Activated T-helper 2 cell treated with anti-CD3 and anti-CD28 coated beads, Interferon-gamma antibody, Interleukin-2, Interleukin-4, amounts not matched to agents 10 μg/mL and 5 μg/mL and 100 μg/mL, durations not matched to agents 14 hours and 24 hours and 36 hours (primary cell): ENCODE measurements at regions of chr13 and their contacts with region 1.

Region 1: DNA sequence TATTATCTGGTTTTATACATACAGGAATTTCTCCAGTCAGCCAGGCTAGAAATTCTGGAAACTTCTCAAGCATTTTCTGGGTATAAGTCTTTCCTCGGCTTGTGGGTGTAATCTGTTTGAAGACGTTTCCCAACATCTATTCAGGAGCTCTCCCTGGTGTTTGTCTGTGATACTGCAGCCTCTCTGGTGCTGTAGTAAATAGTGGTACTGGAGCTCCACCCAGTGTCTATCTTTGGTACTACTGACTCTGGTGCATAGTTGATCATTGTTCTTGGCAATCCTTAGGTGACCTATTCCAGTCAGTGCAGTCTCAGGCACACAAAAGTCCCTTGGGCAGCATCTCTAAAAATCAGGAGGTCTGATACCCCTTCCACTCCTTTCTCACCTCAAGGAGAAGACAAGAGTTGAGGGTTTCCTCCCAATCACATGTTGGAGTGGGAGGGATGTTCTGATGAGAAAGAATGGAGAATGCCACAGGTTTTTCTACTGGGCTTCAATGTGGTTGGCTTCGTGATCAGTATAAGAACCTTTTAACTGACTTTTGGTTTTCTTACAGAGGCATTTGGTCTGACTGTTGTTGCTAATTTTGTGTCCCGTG is 115.5 kb downstream of the CYSLTR2 start:
- DNase-seq: peak; percentile 70
- H3K4me3 Mint-ChIP-seq: no peak overlapping the region
- H3K27ac Mint-ChIP-seq: no peak overlapping the region
- H3K4me1 Mint-ChIP-seq: peaks cover 7% of the 10 kb centered on the region
- H3K27me3 Mint-ChIP-seq: peaks cover 34% of the 10 kb centered on the region

Region 2: DNA sequence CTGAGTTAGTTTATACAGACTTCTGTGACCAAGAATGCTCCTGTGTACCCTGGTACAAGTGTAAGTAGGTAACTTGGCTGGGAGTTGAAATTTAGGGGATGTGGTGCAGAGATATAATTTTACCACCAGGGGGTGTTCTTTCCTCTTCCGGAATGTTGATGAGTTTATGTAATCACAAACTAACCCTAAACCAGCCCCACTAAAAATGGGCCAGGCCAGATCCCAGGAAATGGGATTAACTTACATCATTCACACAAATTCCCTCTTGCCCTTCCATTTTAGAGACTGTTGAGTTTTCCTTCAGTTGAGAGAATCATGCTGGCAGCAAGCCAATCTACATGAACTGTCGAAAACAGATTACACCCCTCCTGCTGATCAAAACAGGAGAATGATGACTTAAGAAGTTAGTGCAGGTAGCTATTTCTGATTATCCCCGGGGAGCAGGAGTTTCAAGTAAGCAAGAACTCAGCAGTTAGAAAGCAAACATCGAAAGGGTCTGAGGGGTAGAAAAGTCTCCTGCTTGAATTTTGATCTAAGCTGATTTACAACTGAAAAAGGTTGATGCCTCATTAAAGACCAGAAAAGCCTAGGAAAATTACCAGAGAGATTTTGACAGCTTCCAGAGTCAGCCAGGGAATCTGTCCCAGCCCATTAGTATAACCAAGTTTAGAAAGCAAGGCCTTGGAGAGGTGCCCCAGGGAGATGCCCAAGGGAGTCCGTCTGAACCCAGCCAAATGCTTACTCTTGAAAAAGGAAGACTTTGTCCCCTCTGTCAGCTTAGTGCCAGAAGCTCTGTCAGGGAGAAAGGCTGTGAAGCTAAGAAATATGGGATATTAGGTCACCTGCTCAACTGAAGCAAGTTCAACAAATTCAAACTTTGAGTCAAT is 642.0 kb before region 1 on chr13:
- intact Hi-C with region 1: loop called (anchors 1 kb)
- DNase-seq: peak; percentile 14
- H3K4me3 Mint-ChIP-seq: no peak overlapping the region
- H3K27ac Mint-ChIP-seq: no peak overlapping the region
- H3K4me1 Mint-ChIP-seq: peaks cover 9% of the 10 kb centered on the region
- H3K27me3 Mint-ChIP-seq: peaks cover 10% of the 10 kb centered on the region

Region 3: GRCh38 chr13:48580185-48580803 is 188.9 kb before region 1 on chr13:
- intact Hi-C with region 1: loop called (anchors 1 kb)
- DNase-seq: peak; percentile 39
- H3K4me3 Mint-ChIP-seq: no peak overlapping the region
- H3K27ac Mint-ChIP-seq: no peak overlapping the region
- H3K4me1 Mint-ChIP-seq: peaks cover 33% of the 10 kb centered on the region
- H3K27me3 Mint-ChIP-seq: peaks cover 61% of the 10 kb centered on the region

Region 4: GRCh38 chr13:48653472-48653939 is 115.7 kb before region 1 on chr13 and contains the start of gene CYSLTR2:
- intact Hi-C with region 1: loop called (anchors 5 kb)
- DNase-seq: peak; percentile 28
- H3K4me3 Mint-ChIP-seq: peak within 1 kb of the TSS; percentile 79
- H3K27ac Mint-ChIP-seq: peak within 1 kb of the TSS; percentile 84
- H3K4me1 Mint-ChIP-seq: peaks cover 41% of the 10 kb centered on the region
- H3K27me3 Mint-ChIP-seq: no peaks in the 10 kb centered on the region
- total RNA-seq, gene CYSLTR2: 3.2 and 3.7 TPM in 2 replicates

Region 5: DNA sequence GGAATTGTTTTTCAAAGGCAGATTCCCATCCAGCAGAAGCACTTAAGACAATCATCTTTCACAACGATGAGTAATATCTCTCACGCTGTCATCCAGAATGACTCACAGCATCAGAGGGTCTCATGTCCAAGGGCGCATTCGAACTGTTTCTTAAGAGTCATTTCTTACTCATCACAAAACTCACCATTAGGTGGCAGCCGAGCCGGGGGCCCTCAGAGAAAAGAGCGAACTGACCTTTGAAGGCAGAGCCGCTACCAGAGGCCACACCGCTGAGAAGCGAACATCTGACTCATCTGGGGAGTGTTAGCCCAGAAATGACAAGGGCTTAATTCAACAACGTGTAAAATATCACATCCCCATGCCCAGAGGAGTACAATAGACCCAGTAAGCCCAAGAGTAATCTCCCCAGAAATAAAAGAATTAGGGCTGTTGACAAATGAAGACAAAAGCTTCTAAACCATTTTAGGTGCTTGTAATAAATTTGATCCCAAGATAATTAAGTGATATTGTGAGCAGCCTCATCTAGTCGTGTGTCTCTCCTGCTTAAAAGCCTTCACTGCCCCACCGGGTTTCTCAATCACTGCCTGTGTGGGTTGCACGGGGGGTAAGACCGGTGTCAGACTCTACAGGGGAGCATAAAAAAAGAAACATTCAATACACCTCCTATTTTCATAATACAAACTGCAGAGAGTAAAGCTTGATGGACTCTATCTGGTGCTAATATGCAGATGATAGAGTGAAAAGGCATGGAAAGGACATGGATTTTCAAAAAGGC is 19.3 kb before region 1 on chr13:
- intact Hi-C with region 1: loop called (anchors 1 kb)
- DNase-seq: peak; percentile 46
- H3K4me3 Mint-ChIP-seq: no peak overlapping the region
- H3K27ac Mint-ChIP-seq: peak overlapping the region; percentile 70
- H3K4me1 Mint-ChIP-seq: peaks cover 13% of the 10 kb centered on the region
- H3K27me3 Mint-ChIP-seq: peaks cover 2% of the 10 kb centered on the region

Region 6: DNA sequence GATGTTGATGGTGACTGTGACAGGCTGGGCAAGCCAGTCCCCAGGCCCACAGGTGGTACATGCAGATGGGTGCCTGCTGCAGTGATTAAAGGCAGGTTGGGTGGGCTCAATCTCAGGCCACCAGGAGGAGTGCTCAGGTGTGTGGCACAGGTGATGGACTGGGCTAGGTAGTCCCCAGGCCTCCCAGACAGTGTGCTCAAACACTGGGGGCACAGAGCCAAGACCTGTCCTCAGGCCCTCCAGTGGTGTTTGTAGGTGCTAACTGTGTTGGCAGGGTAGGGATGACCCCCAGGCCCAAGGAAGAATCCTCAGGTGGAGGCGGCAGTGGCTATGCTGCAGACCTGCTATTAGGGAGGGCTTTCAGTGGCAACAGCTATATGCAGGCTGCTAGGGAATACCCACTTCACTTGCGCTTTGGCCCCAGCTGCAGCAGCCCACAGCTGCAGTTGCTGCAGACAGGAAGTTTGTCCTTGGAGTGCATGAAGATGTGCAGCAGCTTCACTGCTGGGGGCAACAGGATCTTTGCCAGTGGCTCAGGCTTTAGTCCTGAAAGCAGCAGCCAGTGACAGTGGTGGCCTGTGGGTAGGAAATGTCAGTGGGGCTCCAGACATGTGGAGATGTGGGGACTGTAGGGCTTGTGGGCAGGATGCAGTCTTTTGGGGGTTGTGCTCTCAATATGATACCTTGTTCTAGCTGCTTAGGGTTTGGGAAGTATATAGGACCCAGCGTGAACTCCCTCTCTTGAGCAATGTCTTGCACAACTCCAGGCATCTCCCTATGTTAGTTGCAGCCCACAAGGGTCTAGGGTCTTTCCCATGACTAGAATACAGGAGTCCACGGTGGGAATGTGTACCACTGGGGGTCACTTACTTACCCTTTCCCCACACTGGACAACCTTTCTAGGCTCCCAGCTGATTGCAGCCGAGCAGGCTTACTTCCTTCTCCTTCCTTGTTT is 396.9 kb after region 1 on chr13:
- intact Hi-C with region 1: no loop called
- DNase-seq: no peak
- H3K4me3 Mint-ChIP-seq: no peak overlapping the region
- H3K27ac Mint-ChIP-seq: no peak overlapping the region
- H3K4me1 Mint-ChIP-seq: no peaks in the 10 kb centered on the region
- H3K27me3 Mint-ChIP-seq: no peaks in the 10 kb centered on the region